GM12878 (cell line): ENCODE measurements at regions of chr12 and their contacts with region 1.

Region 1: DNA sequence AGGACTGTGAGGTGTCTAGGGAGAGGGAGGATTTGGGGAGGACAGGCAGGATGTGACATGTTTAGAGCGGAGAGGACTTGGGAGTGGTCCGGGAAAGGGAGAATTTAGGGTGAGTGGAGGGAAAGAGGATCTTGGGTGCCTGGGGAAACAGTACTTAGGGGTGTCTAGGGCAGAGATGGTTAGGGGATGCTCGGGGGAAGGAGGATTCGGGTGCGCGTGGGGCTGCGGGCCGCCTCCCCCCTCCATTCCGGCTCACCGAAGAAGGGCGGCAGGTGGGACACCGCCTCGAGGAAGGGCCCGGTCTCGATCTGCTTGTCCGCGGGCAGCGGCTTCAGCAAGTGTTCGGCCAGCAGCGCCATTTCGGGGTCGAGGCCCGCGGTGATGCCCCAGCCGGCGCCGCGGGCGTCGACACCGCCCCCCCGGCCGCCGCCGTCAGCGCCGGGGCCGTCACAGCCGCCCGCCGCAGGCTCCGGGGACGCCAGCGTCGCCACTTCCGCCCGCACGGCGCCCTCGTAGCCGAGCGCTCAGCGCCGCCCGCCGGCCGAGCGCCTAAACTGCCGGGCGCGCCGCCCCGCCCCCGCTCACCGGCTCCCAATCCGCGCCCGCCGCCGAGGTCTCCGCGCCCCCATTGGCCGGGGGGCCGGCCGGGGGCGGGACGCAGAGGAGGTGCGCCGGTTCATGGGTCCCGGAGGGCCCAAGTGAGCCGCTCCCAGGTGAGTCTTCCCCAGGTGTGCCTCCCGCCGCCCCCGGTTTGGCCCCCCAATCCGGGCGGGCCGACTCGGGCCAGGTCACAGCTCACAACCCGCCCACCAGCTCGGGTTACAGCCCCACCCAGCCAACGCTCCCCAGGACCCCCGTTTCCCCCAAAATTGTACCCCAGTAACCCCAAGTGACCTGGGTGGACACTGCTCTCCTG is at the start of gene GLTP:
- DNase-seq: no peak
- ATAC-seq: peak; percentile 91
- H3K4me3 ChIP-seq: peak within 1 kb of the TSS; percentile 97
- H3K27ac ChIP-seq: no peak within 1 kb of the TSS; the same call in 1 of the 2 replicates
- H3K4me1 ChIP-seq: peaks cover 26% of the 10 kb centered on the region
- H3K27me3 ChIP-seq: no peaks in the 10 kb centered on the region
- CTCF ChIP-seq: peak; percentile 43 to 86 (median 50); a peak in 4 of 6 replicates
- EP300 ChIP-seq: no peak
- POLR2A ChIP-seq: peak; percentile 75
- RAD21 ChIP-seq: peak; percentile 78
- polyA plus RNA-seq, gene GLTP: 19.8 to 20.3 TPM

Region 2: DNA sequence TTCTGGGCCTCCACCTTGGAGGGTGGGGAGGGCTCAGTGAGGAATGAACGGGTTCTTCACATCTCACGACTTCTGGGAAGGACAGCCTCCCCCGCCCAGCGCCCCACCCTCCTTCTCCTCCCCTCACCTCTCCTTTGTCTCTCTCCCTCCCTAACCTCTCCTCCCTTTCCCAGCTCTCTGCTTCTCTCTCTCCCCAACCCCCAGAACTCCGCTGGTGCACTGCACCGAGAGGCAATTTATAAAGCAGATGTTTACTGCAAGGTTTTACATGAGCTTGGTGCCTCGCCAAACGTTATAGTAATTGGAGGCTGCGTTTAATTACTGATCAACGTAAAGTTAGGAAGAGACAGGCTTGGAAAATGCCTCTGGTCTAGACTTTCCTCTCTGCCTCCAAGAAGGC is 209.5 kb before region 1 on chr12:
- CTCF ChIA-PET with region 1: no interaction called
- POLR2A ChIA-PET with region 1: no interaction called
- RAD21 ChIA-PET with region 1: no interaction called
- SMC1A ChIA-PET with region 1: no interaction called
- in situ Hi-C with region 1: no loop called
- intact Hi-C with region 1: no loop called
- DNase-seq: no peak
- ATAC-seq: no peak
- H3K4me3 ChIP-seq: no peak overlapping the region
- H3K27ac ChIP-seq: no peak overlapping the region
- H3K4me1 ChIP-seq: no peaks in the 10 kb centered on the region
- H3K27me3 ChIP-seq: no peaks in the 10 kb centered on the region
- CTCF ChIP-seq: no peak
- EP300 ChIP-seq: no peak
- POLR2A ChIP-seq: no peak
- RAD21 ChIP-seq: no peak

Region 3: GRCh38 chr12:109804820-109805761 is 75.2 kb before region 1 on chr12:
- CTCF ChIA-PET with region 1: interaction called, 10 read pairs
- POLR2A ChIA-PET with region 1: no interaction called
- RAD21 ChIA-PET with region 1: no interaction called
- SMC1A ChIA-PET with region 1: no interaction called
- in situ Hi-C with region 1: loop called (anchors 5 kb)
- intact Hi-C with region 1: loop called (anchors 1 kb)
- DNase-seq: no peak
- ATAC-seq: peak; percentile 91
- H3K4me3 ChIP-seq: no peak overlapping the region
- H3K27ac ChIP-seq: no peak overlapping the region
- H3K4me1 ChIP-seq: no peaks in the 10 kb centered on the region
- H3K27me3 ChIP-seq: no peaks in the 10 kb centered on the region
- CTCF ChIP-seq: peak; percentile 88 to 98 (median 95)
- EP300 ChIP-seq: no peak
- POLR2A ChIP-seq: no peak
- RAD21 ChIP-seq: peak; percentile 82